ENCODE measurements at regions of chr7 and their contacts with region 1.

Region 1: GRCh38 chr7:112550468-112551060 is 69.8 kb downstream of the LSMEM1 start:
- DNase-seq: no peak
- H3K4me3 ChIP-seq: peak overlapping the region; percentile 20 to 24
- H3K27ac ChIP-seq: no peak overlapping the region
- H3K4me1 ChIP-seq: no peaks in the 10 kb centered on the region
- H3K27me3 ChIP-seq: no peaks in the 10 kb centered on the region
- CTCF ChIP-seq: peak; percentile 39 to 89 (median 77)
- POLR2A ChIP-seq: no peak

Region 2: DNA sequence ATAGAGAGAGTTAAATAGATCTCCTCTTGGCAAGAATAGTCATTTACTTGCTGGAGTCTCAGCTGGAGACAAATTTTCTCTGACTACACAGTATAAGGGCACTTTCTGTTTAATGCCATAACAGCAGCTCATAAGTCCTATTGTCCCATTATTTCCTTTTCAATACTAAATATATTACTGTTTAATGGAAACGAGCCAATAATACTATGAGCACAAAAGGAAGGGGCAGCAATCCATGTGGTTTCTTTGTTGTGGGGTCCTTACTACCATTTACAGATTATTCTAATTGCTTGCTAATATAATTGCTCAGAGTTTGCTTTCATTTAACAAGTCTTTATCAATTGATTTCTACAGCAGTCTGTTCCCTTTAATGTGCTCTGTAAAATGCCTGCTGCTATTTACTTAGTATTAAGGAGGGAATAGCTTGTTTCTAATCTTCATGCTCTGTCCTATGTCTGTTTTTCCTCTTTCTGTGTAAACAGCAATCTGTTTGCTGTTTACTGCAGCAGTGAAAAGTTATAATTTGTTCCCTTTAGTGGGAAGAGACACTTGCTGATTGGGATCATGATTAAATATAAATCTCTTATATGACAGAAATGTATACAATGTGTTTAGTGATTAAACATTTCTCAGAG is 864.0 kb after region 1 on chr7:
- intact Hi-C with region 1: loop called (anchors 10 kb)
- DNase-seq: no peak
- H3K4me3 ChIP-seq: no peak overlapping the region
- H3K27ac ChIP-seq: no peak overlapping the region
- H3K4me1 ChIP-seq: no peaks in the 10 kb centered on the region
- H3K27me3 ChIP-seq: no peaks in the 10 kb centered on the region
- CTCF ChIP-seq: no peak
- POLR2A ChIP-seq: no peak

Measured in testis (tissue), 5 donors.